PC-3 (cell line): ENCODE measurements at regions of chr11 and their contacts with region 1.

Region 1: GRCh38 chr11:89184021-89184420 is 6.3 kb downstream of the TYR start:
- DNase-seq: peak; percentile 26
- ATAC-seq: no peak
- H3K4me3 ChIP-seq: no peak overlapping the region
- H3K27ac ChIP-seq: no peak overlapping the region
- H3K4me1 ChIP-seq: no peaks in the 10 kb centered on the region
- H3K27me3 ChIP-seq: peaks cover 4% of the 10 kb centered on the region; the same call in 1 of the 2 replicates
- CTCF ChIP-seq: no peak

Region 2: GRCh38 chr11:87934182-87934581 is 1249.8 kb before region 1 on chr11:
- CTCF ChIA-PET with region 1: no interaction called
- POLR2A ChIA-PET with region 1: interaction called, 10 read pairs
- intact Hi-C with region 1: no loop called
- DNase-seq: no peak
- ATAC-seq: no peak
- H3K4me3 ChIP-seq: no peak overlapping the region
- H3K27ac ChIP-seq: no peak overlapping the region
- H3K4me1 ChIP-seq: no peaks in the 10 kb centered on the region
- H3K27me3 ChIP-seq: no peaks in the 10 kb centered on the region
- CTCF ChIP-seq: no peak

Region 3: GRCh38 chr11:88569342-88569741 is 614.7 kb before region 1 on chr11:
- CTCF ChIA-PET with region 1: no interaction called
- POLR2A ChIA-PET with region 1: no interaction called
- intact Hi-C with region 1: no loop called
- DNase-seq: peak; percentile 19
- ATAC-seq: peak; percentile 43
- H3K4me3 ChIP-seq: no peak overlapping the region
- H3K27ac ChIP-seq: no peak overlapping the region
- H3K4me1 ChIP-seq: no peaks in the 10 kb centered on the region
- H3K27me3 ChIP-seq: no peaks in the 10 kb centered on the region
- CTCF ChIP-seq: no peak